H1 (cell line): ENCODE measurements at regions of chr14 and their contacts with region 1.

Region 1: GRCh38 chr14:57317316-57317715 is 48.5 kb downstream of the AP5M1 start:
- DNase-seq: peak; percentile 36 to 82
- H3K4me3 ChIP-seq: no peak overlapping the region
- H3K27ac ChIP-seq: no peak overlapping the region
- H3K4me1 ChIP-seq: no peaks in the 10 kb centered on the region
- H3K27me3 ChIP-seq: no peaks in the 10 kb centered on the region
- CTCF ChIP-seq: peak; percentile 51 to 79 (median 75)
- EP300 ChIP-seq: no peak
- POLR2A ChIP-seq: no peak
- RAD21 ChIP-seq: peak; percentile 87 to 90

Region 2: GRCh38 chr14:57302883-57303282 is 14.4 kb before region 1 on chr14:
- CTCF ChIA-PET with region 1: interaction called, 11 read pairs
- POLR2A ChIA-PET with region 1: no interaction called
- DNase-seq: no peak
- H3K4me3 ChIP-seq: no peak overlapping the region
- H3K27ac ChIP-seq: no peak overlapping the region
- H3K4me1 ChIP-seq: no peaks in the 10 kb centered on the region
- H3K27me3 ChIP-seq: no peaks in the 10 kb centered on the region
- CTCF ChIP-seq: no peak
- EP300 ChIP-seq: no peak
- POLR2A ChIP-seq: no peak
- RAD21 ChIP-seq: no peak

Region 3: DNA sequence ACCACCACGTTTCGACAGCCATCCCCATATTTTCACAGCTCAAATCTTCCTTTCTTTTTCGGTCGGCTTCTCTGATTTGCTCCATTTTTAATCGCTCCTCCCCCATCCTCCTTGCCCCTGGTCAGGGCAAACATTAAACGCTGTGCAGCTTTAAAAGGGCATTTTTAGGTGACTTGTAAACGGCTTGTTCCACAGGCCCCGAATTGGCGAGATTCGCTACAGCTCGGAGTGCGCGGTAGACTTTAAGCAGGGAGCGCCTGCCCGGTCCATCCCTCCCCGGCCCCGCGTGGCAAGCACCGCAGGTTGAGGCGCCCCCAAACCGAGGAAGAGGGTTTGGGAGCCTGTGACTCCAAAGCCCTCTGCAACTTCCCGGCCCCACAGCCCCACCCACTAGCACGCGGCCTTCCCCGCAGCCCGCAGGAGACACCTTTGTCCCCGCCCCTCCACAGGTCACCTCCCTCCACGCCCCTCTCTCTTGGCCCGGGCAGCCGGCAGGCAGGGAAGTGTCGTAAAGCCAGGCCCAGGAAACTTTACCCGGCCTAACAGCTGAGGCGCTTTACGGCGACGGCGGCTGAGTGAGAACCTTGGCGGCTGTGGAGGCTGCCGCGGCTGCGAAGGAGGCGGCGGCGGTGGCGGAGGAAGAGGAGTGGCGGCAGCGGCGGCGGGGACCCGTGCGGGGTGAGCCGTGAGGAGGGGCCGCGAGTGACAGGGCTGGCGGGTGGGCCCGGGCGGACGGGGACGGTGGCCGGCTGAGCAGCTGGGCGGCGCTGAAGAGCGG is 72.9 kb after region 1 on chr14 and contains the start of gene NAA30:
- CTCF ChIA-PET with region 1: no interaction called
- POLR2A ChIA-PET with region 1: no interaction called
- DNase-seq: peak; percentile 79 to 90
- H3K4me3 ChIP-seq: peak within 1 kb of the TSS; percentile 76 to 83 (median 82)
- H3K27ac ChIP-seq: peak within 1 kb of the TSS; percentile 20; the same call in 1 of the 2 replicates
- H3K4me1 ChIP-seq: peaks cover 3 to 8% (median 6%) of the 10 kb centered on the region in 4 experiments; a peak in 4 of 7 replicates
- H3K27me3 ChIP-seq: no peaks in the 10 kb centered on the region
- CTCF ChIP-seq: peak in 1 of 3 experiments; percentile 6; a peak in 1 of 4 replicates
- EP300 ChIP-seq: no peak
- POLR2A ChIP-seq: peak; percentile 40 to 63
- RAD21 ChIP-seq: no peak
- total RNA-seq, gene NAA30: 20.3 and 21.9 TPM in 2 replicates